Heart right ventricle (tissue), 16 donors: ENCODE measurements at regions of chr18 and their contacts with region 1.

Region 1: GRCh38 chr18:36862182-36862581 is 33.3 kb downstream of the KIAA1328 start:
- DNase-seq: no peak
- ATAC-seq: no peak
- H3K4me3 ChIP-seq: no peak overlapping the region
- H3K27ac ChIP-seq: no peak overlapping the region
- H3K4me1 ChIP-seq: peaks cover 0 to 2% (median 0%) of the 10 kb centered on the region in 9 donors
- H3K27me3 ChIP-seq: no peaks in the 10 kb centered on the region
- CTCF ChIP-seq: no peak

Region 2: GRCh38 chr18:37309055-37309454 is 446.9 kb after region 1 on chr18:
- intact Hi-C with region 1: loop called in 1 of 10 experiments (anchors 5 kb)
- DNase-seq: no peak
- ATAC-seq: no peak
- H3K4me3 ChIP-seq: no peak overlapping the region
- H3K27ac ChIP-seq: no peak overlapping the region
- H3K4me1 ChIP-seq: no peaks in the 10 kb centered on the region
- H3K27me3 ChIP-seq: no peaks in the 10 kb centered on the region
- CTCF ChIP-seq: no peak